ENCODE measurements at regions of chr10 and their contacts with region 1.

Region 1: DNA sequence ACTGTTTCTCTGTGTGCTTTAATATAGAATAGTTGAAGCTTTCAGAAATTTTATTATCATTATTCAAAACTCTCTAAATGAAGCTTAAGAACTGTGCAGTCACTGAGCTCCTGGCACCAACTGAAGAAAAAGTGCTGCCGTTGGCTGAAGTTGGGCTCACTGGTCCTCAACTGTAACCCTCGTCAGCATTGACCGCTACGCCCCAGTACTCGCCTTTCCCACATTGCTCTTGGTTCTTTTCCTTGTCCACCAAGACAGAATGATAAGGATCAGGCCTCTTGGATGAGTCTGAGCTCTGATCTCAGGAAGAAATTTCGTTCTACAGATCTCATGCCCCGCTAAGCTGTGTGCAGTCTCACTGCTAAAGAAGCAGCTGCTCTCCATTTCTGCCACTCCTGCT is 7.9 kb upstream of the TAF3 start:
- DNase-seq: no peak
- ATAC-seq: peak; percentile 44
- H3K4me3 ChIP-seq: no peak overlapping the region
- H3K27ac ChIP-seq: no peak overlapping the region
- H3K4me1 ChIP-seq: no peaks in the 10 kb centered on the region
- H3K27me3 ChIP-seq: no peaks in the 10 kb centered on the region
- CTCF ChIP-seq: no peak

Region 2: DNA sequence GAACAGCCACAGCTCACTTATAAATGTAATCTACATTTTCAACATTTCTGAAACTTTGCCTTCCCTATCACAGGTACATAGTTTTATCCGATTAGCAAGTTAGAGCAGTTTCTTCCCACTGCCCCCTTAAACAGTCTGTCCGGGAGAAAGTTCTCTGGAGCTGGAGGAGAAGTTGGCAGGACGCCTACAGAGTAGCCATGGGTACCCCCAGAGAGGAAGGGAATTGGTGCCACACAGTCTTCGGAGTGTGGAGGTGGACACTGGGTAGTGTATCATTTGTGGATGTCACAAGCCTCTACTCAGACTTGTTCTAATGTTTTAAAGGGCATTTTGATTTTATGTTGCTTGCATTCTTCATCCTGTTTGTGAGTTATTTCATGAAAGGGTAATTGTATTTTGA is 46.8 kb after region 1 on chr10:
- CTCF ChIA-PET with region 1: no interaction called
- POLR2A ChIA-PET with region 1: interaction called, 10 read pairs
- intact Hi-C with region 1: no loop called
- DNase-seq: no peak
- ATAC-seq: no peak
- H3K4me3 ChIP-seq: no peak overlapping the region
- H3K27ac ChIP-seq: no peak overlapping the region
- H3K4me1 ChIP-seq: no peaks in the 10 kb centered on the region
- H3K27me3 ChIP-seq: no peaks in the 10 kb centered on the region
- CTCF ChIP-seq: no peak

Measured in PC-3 (cell line).